K562 (cell line): ENCODE measurements at regions of chr2 and their contacts with region 1.

Region 1: DNA sequence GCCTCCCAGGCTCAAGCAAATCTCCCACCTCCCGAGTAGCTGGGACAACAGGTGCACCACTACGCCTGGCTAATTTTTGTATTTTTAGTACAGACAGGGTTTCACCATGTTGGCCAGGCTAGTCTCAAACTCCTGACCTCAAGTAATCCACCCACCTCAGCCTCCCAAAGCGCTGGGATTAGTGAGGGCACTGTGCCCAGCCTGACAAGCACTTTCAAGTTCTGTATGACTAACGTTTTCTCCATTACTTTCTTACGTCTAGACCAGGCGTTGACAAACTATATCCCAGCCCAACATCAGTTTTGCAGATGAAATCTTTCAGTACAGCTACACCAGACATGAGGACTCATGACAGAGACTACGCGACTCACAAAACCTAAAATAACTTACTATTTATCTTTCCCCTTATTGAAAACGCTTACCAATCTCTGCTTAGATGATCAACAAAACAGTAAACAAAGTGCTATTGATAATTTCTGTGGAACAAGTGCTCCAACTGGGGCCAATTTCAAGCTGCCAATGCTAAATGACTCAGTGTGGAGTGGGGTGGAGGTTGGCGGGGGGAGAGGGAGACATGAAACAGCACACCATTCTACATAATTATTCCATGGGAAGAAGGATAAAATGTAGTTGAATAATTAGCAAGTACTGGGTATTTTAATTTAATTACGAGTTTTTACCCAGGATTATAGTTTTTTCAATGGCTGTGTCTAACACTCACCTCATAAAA is 59.1 kb downstream of the SAP130 start:
- DNase-seq: no peak
- ATAC-seq: no peak
- H3K4me3 ChIP-seq: no peak overlapping the region
- H3K27ac ChIP-seq: no peak overlapping the region
- H3K4me1 ChIP-seq: no peaks in the 10 kb centered on the region
- H3K27me3 ChIP-seq: no peaks in the 10 kb centered on the region
- CTCF ChIP-seq: no peak
- EP300 ChIP-seq: no peak
- POLR2A ChIP-seq: no peak
- RAD21 ChIP-seq: no peak

Region 2: DNA sequence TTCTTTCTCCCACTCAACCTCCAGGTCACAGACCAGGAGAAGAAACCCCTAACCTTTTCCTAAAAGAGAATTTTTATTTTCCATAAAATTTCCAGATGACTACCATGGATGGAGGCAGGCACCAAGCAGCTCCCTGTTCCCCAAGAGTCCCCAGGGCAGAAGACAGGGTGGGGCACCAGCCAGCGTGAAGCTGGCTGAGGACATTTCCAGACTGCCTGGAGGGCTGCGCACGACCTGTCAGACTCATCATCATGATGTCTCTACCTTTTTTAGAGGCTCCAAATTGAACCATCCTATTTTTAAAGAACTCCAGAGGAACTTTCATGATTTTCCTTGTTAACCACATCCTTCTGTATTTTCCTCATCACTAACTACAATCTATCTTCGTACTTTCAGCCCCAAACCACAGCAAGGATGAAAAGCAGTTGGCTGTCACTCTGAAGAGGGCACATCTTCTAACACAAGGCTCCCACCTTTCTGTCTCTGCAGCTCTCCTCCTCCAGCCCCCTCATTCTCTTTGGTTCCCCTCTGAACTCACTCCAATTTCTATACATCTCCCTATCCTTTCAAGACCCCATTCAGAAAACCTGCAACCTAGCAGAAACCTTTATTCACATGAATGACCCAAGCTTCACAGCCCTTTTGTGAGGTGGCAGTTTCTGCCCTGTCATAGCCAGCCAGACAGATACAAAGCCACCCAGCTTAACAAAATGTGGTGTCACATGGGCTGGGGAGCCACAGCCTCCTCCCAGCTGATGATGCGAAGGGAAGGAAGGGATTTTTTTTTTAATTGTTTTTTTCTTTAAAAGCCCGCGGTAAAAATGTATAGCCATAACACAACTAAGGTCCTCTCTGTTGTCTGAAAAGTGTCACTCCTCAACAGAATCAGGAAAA is 94.2 kb before region 1 on chr2:
- CTCF ChIA-PET with region 1: no interaction called
- POLR2A ChIA-PET with region 1: no interaction called
- in situ Hi-C with region 1: no loop called
- intact Hi-C with region 1: loop called (anchors 10 kb)
- DNase-seq: no peak
- ATAC-seq: peak; percentile 50; the same call in 1 of the 3 replicates
- H3K4me3 ChIP-seq: no peak overlapping the region
- H3K27ac ChIP-seq: no peak overlapping the region
- H3K4me1 ChIP-seq: no peaks in the 10 kb centered on the region; a peak in 1 of 5 replicates
- H3K27me3 ChIP-seq: no peaks in the 10 kb centered on the region
- CTCF ChIP-seq: no peak
- EP300 ChIP-seq: no peak
- POLR2A ChIP-seq: no peak
- RAD21 ChIP-seq: no peak